ENCODE measurements at regions of chr6 and their contacts with region 1.

Region 1: DNA sequence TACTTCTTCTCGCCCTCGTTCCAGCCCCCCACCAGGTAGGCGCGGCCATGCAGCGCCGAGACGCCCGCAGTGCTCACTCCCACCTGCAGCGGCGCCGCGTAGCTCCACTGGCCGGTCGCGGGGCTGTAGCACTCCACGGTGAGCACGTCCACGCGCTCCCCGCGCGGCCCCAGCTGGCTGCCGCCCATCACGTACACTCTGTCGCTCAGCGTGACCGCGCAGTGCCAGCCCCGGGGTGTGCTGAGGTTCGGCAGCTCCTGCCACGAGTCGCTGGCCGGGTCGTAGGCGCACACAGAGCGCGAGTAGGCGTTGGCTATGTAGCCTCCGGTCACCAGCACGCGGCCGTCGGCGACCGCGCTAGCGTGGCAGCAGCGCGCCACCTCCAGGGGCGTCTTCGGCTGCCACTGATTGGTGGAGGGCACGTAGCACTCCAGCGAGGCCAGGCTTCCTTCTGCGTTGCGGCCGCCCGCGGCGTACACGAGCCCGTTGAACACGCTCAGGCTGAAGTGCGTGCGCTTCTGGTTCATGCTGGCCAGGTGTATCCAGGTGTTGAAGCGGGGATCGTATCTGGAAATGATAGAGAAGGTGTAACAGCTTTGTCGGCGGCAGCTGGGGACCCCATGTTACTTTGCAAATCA is 13.7 kb downstream of the KLHL31 start:
- DNase-seq: peak; percentile 79
- H3K4me3 ChIP-seq: peak overlapping the region; percentile 48
- H3K27ac ChIP-seq: no peak overlapping the region
- H3K4me1 ChIP-seq: no peaks in the 10 kb centered on the region
- H3K27me3 ChIP-seq: peaks cover 21% of the 10 kb centered on the region
- CTCF ChIP-seq: peak; percentile 45

Region 2: GRCh38 chr6:53375847-53376246 is 276.0 kb before region 1 on chr6:
- CTCF ChIA-PET with region 1: interaction called, 10 read pairs
- POLR2A ChIA-PET with region 1: no interaction called
- intact Hi-C with region 1: no loop called
- DNase-seq: no peak
- H3K4me3 ChIP-seq: no peak overlapping the region
- H3K27ac ChIP-seq: no peak overlapping the region
- H3K4me1 ChIP-seq: no peaks in the 10 kb centered on the region
- H3K27me3 ChIP-seq: peaks cover 3% of the 10 kb centered on the region
- CTCF ChIP-seq: no peak

Region 3: DNA sequence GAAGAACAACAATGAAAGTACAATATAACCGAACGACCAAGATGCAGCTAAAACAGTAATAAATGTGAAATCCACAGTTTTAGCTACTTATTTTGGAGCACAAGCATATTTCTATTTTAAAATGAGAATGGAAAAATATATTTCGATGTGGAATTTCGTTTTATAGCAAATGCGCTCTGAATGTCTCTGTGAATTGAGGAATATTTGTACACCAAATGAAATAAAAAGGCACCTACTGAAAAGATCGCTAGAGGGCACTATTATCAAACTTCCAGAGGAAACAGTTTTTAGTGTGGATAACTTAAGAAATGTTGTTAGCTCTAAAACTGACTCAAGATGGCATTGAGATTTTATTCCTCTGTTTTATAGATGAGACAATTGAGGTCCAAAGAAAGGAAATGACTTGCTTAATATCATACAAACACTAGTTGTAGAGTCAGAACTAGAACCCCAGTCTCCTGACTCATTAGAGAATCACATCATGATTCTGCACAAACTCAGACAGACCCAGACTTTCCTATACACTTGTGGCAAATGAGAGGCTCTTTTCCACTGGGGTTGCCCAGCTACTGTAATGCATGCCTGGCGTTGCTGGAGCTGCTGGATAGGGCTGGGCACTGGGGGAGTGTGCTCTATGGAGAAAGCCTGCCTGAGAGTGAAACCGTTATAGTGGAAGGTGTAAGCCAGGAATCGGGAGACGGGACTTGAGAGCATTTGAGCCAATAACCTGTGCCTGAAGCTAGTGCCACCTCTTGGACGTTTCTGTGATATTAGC is 158.8 kb before region 1 on chr6:
- CTCF ChIA-PET with region 1: interaction called, 9 read pairs
- POLR2A ChIA-PET with region 1: no interaction called
- intact Hi-C with region 1: loop called (anchors 1 kb)
- DNase-seq: peak; percentile 73
- H3K4me3 ChIP-seq: no peak overlapping the region
- H3K27ac ChIP-seq: no peak overlapping the region
- H3K4me1 ChIP-seq: no peaks in the 10 kb centered on the region
- H3K27me3 ChIP-seq: no peaks in the 10 kb centered on the region
- CTCF ChIP-seq: peak; percentile 74